ENCODE measurements at regions of chr9 and their contacts with region 1.

Region 1: DNA sequence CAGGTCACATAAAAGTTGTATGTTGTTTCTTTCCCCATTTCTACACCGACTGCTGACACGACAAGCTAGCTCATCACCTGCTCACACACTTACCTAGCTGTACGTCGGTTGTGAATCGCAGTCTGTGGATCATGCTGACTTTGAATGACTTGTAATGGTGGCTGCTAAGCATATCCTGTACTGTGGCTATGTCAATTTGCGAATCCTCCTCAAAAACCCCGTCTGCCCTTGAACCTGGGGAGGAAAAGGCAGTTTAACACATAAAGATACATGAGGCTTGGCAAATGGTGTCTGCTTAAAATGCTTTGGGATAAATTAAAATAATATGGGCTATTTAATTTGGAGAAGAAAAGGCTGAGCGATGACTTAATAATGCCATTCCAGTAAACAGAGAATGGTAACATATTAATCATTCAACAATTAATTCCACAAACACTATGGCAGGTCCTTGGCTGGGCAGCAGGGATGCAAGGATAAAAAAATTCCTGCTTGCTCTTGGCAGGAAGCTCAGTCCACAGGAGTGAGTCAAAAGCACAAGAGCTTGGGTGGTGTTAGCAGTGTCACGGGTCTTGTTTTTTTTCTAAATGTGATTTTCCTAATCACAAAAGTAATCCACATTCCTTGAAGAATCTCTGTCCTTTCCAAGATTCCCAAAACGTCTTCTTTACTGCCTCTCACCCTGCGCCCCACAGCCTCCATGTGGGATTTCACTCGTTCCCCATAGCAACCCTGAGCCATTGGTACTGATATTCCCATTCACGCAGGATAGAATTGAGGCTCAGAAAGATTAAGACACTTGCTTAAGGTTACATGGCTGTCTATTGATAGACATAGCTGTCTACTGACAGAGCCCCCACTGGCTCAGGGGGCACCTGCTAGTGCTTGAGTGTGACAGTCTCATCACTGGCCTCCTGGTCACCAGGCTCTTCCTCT is 222.4 kb downstream of the MAPKAP1 start:
- DNase-seq: peak; percentile 20 to 52 (median 41)
- ATAC-seq: peak; percentile 83
- H3K4me3 ChIP-seq: no peak overlapping the region
- H3K27ac ChIP-seq: peak overlapping the region in 3 of 4 donors; percentile 23 to 65 (median 33)
- H3K4me1 ChIP-seq: peaks cover 12% of the 10 kb centered on the region
- H3K27me3 ChIP-seq: no peaks in the 10 kb centered on the region
- CTCF ChIP-seq: no peak
- POLR2A ChIP-seq: no peak

Region 2: DNA sequence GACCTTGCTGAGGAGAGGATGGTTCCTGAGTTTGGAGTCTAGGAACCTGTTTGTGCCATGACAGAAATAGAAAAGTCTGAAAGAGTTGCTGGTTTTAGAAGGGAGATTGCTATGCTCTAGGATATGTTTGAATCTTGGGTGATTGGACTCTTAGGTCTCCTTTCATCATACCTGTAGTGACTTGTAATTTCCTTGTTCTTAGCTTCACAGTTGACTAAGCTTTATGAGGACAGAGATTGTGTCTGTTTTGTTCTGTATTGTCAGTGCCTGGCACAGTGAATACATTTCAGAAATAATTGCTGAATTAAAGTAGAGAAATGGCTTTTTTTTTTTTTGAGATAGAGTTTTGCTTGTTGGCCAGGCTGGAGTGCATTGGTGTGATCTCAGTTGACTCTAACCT is 191.5 kb before region 1 on chr9:
- intact Hi-C with region 1: loop called (anchors 5 kb)
- DNase-seq: no peak
- ATAC-seq: no peak
- H3K4me3 ChIP-seq: no peak overlapping the region
- H3K27ac ChIP-seq: no peak overlapping the region
- H3K4me1 ChIP-seq: peaks cover 19% of the 10 kb centered on the region
- H3K27me3 ChIP-seq: no peaks in the 10 kb centered on the region
- CTCF ChIP-seq: no peak
- POLR2A ChIP-seq: no peak